Naive thymus-derived CD4-positive, alpha-beta T cell (primary cell): ENCODE measurements at regions of chr4 and their contacts with region 1.

Region 1: GRCh38 chr4:40897557-40898203 is 147.9 kb downstream of the NSUN7 start:
- DNase-seq: peak; percentile 20 to 69 (median 42)
- ATAC-seq: peak; percentile 74
- H3K4me3 ChIP-seq: no peak overlapping the region
- H3K4me3 Mint-ChIP-seq: peak overlapping the region; percentile 6 to 84 (median 76)
- H3K27ac ChIP-seq: no peak overlapping the region
- H3K27ac Mint-ChIP-seq: peak overlapping the region in 3 of 9 donors; percentile 34 to 72 (median 38)
- H3K4me1 ChIP-seq: no peaks in the 10 kb centered on the region
- H3K4me1 Mint-ChIP-seq: peaks cover 0 to 5% (median 4%) of the 10 kb centered on the region in 7 donors
- H3K27me3 ChIP-seq: no peaks in the 10 kb centered on the region
- H3K27me3 Mint-ChIP-seq: no peaks in the 10 kb centered on the region

Region 2: GRCh38 chr4:40840985-40841571 is 56.6 kb before region 1 on chr4:
- CTCF ChIA-PET with region 1: interaction called, 3 read pairs
- POLR2A ChIA-PET with region 1: no interaction called
- intact Hi-C with region 1: loop called (anchors 1 to 2 kb)
- DNase-seq: peak; percentile 8 to 75 (median 40)
- ATAC-seq: peak; percentile 87
- H3K4me3 ChIP-seq: no peak overlapping the region
- H3K4me3 Mint-ChIP-seq: no peak overlapping the region
- H3K27ac ChIP-seq: no peak overlapping the region
- H3K27ac Mint-ChIP-seq: no peak overlapping the region
- H3K4me1 ChIP-seq: no peaks in the 10 kb centered on the region
- H3K4me1 Mint-ChIP-seq: peaks cover 0 to 5% (median 0%) of the 10 kb centered on the region in 7 donors
- H3K27me3 ChIP-seq: no peaks in the 10 kb centered on the region
- H3K27me3 Mint-ChIP-seq: peaks cover 0 to 8% (median 0%) of the 10 kb centered on the region in 5 donors